Endothelial cell of umbilical vein (primary cell): ENCODE measurements at regions of chr4 and their contacts with region 1.

Region 1: GRCh38 chr4:15655229-15656037 is at the start of gene FBXL5:
- DNase-seq: peak; percentile 86
- H3K4me3 ChIP-seq: peak within 1 kb of the TSS; percentile 78 to 97 (median 91)
- H3K27ac ChIP-seq: peak within 1 kb of the TSS; percentile 98
- H3K4me1 ChIP-seq: peaks cover 29% of the 10 kb centered on the region
- H3K27me3 ChIP-seq: no peaks in the 10 kb centered on the region
- CTCF ChIP-seq: no peak
- POLR2A ChIP-seq: peak; percentile 92
- total RNA-seq, gene FBXL5: 60.2 and 64.8 TPM in 2 replicates

Region 2: DNA sequence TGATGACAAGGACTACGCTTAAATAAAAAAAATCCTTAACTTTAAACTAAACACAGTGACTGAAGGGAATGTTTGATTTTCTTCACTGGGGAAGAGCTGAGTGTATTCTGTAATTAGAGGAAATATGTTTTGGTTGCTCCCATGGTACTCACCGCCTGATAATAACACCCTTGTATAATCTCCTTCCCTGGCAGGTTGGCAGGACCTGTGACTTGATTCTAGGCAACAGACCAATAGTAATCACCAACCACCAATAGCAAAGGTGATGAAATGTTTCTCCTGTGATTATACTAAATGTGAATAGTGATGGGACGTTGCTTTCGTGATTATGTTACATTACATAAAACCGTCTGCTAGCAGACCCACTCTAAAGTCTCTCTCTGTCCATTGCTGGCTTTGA is 1189.9 kb before region 1 on chr4:
- CTCF ChIA-PET with region 1: no interaction called
- POLR2A ChIA-PET with region 1: no interaction called
- dilution Hi-C with region 1: no loop called
- intact Hi-C with region 1: no loop called
- DNase-seq: no peak
- H3K4me3 ChIP-seq: no peak overlapping the region
- H3K27ac ChIP-seq: no peak overlapping the region
- H3K4me1 ChIP-seq: no peaks in the 10 kb centered on the region
- H3K27me3 ChIP-seq: no peaks in the 10 kb centered on the region
- CTCF ChIP-seq: no peak
- POLR2A ChIP-seq: no peak

Region 3: GRCh38 chr4:15231265-15232091 is 424.0 kb before region 1 on chr4:
- CTCF ChIA-PET with region 1: no interaction called
- POLR2A ChIA-PET with region 1: no interaction called
- dilution Hi-C with region 1: no loop called
- intact Hi-C with region 1: loop called (anchors 10 kb)
- DNase-seq: peak; percentile 62
- H3K4me3 ChIP-seq: no peak overlapping the region
- H3K27ac ChIP-seq: no peak overlapping the region
- H3K4me1 ChIP-seq: no peaks in the 10 kb centered on the region
- H3K27me3 ChIP-seq: no peaks in the 10 kb centered on the region
- CTCF ChIP-seq: peak; percentile 60 to 61
- POLR2A ChIP-seq: no peak

Region 4: GRCh38 chr4:15562114-15562513 is 93.3 kb before region 1 on chr4:
- CTCF ChIA-PET with region 1: no interaction called
- POLR2A ChIA-PET with region 1: no interaction called
- dilution Hi-C with region 1: no loop called
- intact Hi-C with region 1: no loop called
- DNase-seq: no peak
- H3K4me3 ChIP-seq: no peak overlapping the region
- H3K27ac ChIP-seq: no peak overlapping the region
- H3K4me1 ChIP-seq: no peaks in the 10 kb centered on the region
- H3K27me3 ChIP-seq: no peaks in the 10 kb centered on the region
- CTCF ChIP-seq: no peak
- POLR2A ChIP-seq: no peak

Region 5: DNA sequence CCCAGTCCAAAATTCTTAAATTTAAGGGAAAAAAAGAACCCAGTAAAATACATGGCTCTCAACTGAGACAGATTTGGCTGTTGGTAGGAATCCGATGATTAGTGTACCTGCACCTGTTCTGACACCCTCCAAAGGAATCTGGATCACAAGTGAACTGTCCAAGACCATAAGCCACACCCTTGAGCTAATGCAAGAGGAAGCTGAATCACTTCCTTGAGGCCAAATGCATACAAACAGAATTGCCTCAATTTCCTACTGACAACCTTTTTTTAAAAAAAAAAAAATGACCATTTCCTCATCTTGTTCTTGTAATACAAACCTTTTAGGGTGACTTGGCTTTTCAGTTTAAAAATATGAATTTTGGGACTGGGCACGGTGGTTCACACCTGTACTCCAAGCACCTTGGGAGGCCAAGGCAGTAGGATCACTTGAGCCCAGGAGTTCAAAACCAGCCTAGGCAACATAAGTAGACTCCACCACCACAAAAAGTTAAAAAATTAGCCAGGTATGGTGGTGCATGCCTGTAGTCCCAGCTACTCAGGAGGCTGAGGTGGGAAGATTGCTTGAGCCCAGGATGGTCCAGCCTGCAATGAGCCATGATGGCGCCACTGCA is 10.4 kb after region 1 on chr4:
- CTCF ChIA-PET with region 1: interaction called, 7 read pairs
- POLR2A ChIA-PET with region 1: no interaction called
- dilution Hi-C with region 1: no loop called
- intact Hi-C with region 1: loop called (anchors 1 kb)
- DNase-seq: peak; percentile 60
- H3K4me3 ChIP-seq: no peak overlapping the region
- H3K27ac ChIP-seq: peak overlapping the region; percentile 77
- H3K4me1 ChIP-seq: peaks cover 35% of the 10 kb centered on the region
- H3K27me3 ChIP-seq: no peaks in the 10 kb centered on the region
- CTCF ChIP-seq: no peak
- POLR2A ChIP-seq: no peak

Region 6: DNA sequence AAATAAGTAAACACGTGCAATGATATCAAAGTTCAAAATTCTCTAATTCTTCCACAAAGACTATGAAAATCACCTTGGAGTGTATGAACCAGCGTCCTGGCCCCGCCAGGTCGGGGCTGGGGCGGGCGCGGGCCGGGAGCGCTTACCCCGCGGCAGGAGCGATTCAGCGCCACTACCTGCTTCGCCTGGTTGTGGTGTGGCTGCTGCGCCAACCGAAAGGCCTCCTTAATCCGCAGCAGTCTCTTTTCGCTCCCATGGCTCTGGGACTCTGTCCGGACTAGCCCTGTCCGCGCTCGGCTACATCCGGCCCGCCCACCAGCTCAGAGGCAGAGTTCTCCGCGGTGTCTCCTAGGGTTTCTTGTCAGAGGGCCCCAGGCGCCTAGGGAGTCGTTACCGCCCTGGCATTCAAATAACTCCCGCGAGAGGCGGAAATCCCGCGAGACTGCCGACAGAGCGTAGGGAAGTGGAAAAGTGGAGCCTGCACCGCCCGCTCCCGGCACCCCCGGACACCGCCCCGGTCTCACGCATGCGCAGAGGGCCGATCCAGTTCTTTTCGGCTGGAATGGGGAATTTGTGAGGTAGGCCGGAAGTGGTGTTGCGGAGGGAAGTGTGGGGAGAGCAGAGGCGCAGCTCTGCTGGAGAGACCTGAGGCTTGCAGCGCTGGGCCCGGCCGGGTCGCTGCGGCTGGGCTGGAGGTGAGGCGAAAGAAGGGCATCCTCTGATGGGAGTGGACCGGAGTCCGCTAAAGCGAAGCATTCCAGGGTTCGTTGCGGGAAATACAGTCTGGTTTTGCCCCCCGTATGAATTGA is 26.0 kb after region 1 on chr4 and contains the start of gene FAM200B:
- CTCF ChIA-PET with region 1: interaction called, 8 read pairs
- POLR2A ChIA-PET with region 1: interaction called, 3 read pairs
- dilution Hi-C with region 1: no loop called
- intact Hi-C with region 1: loop called (anchors 1 kb)
- DNase-seq: peak; percentile 99
- H3K4me3 ChIP-seq: peak within 1 kb of the TSS; percentile 65 to 99 (median 97)
- H3K27ac ChIP-seq: peak within 1 kb of the TSS; percentile 95
- H3K4me1 ChIP-seq: peaks cover 49% of the 10 kb centered on the region
- H3K27me3 ChIP-seq: no peaks in the 10 kb centered on the region
- CTCF ChIP-seq: peak in 1 of 2 donors; percentile 29
- POLR2A ChIP-seq: peak; percentile 85
- total RNA-seq, gene FAM200B: 20.6 and 24.6 TPM in 2 replicates

Region 7: GRCh38 chr4:15690020-15690809 is 34.8 kb after region 1 on chr4:
- CTCF ChIA-PET with region 1: interaction called, 4 read pairs
- POLR2A ChIA-PET with region 1: no interaction called
- dilution Hi-C with region 1: no loop called
- intact Hi-C with region 1: loop called (anchors 1 kb)
- DNase-seq: peak; percentile 68
- H3K4me3 ChIP-seq: no peak overlapping the region
- H3K27ac ChIP-seq: peak overlapping the region; percentile 82
- H3K4me1 ChIP-seq: peaks cover 29% of the 10 kb centered on the region
- H3K27me3 ChIP-seq: no peaks in the 10 kb centered on the region
- CTCF ChIP-seq: no peak
- POLR2A ChIP-seq: no peak

Region 8: GRCh38 chr4:16225863-16226815 is 570.7 kb after region 1 on chr4 and contains the start of gene TAPT1:
- CTCF ChIA-PET with region 1: no interaction called
- POLR2A ChIA-PET with region 1: no interaction called
- dilution Hi-C with region 1: no loop called
- intact Hi-C with region 1: loop called (anchors 10 kb)
- DNase-seq: peak; percentile 54
- H3K4me3 ChIP-seq: peak within 1 kb of the TSS; percentile 92 to 99 (median 99)
- H3K27ac ChIP-seq: peak within 1 kb of the TSS; percentile 60
- H3K4me1 ChIP-seq: peaks cover 15% of the 10 kb centered on the region
- H3K27me3 ChIP-seq: no peaks in the 10 kb centered on the region
- CTCF ChIP-seq: no peak
- POLR2A ChIP-seq: no peak
- total RNA-seq, gene TAPT1: 17.5 and 19.9 TPM in 2 replicates

Region 9: DNA sequence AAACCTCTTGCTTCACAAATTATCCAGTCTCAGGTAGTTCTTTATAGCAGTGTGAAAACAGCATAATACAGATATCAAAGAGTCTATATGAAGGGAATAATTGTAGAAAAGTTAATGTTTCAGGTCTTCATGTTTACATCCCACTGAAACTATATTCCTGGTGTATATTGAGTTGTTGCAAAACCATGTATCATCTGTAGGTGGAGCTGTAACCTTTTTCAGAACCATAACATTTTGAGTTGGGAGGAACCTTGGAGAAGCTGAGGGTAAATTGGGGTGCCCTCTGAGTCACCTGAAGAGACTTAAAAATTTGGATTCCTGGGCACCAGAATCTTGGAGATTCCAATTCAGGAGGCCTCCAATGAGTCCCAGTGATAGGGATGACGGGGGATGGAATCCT is 622.7 kb after region 1 on chr4:
- CTCF ChIA-PET with region 1: no interaction called
- POLR2A ChIA-PET with region 1: no interaction called
- dilution Hi-C with region 1: no loop called
- intact Hi-C with region 1: no loop called
- DNase-seq: no peak
- H3K4me3 ChIP-seq: no peak overlapping the region
- H3K27ac ChIP-seq: no peak overlapping the region
- H3K4me1 ChIP-seq: no peaks in the 10 kb centered on the region
- H3K27me3 ChIP-seq: peaks cover 2 to 5% of the 10 kb centered on the region in 2 experiments
- CTCF ChIP-seq: peak; percentile 23 to 28
- POLR2A ChIP-seq: no peak